H1 (cell line): ENCODE measurements at regions of chr14 and their contacts with region 1.

Region 1: GRCh38 chr14:75577729-75578101 is 705 bp upstream of the FLVCR2 start:
- DNase-seq: peak; percentile 79 to 85
- H3K4me3 ChIP-seq: peak overlapping the region; percentile 46 to 83 (median 72)
- H3K27ac ChIP-seq: no peak overlapping the region
- H3K4me1 ChIP-seq: peaks cover 0 to 13% (median 4%) of the 10 kb centered on the region in 4 experiments; a peak in 4 of 7 replicates
- H3K27me3 ChIP-seq: peaks cover 0 to 8% (median 5%) of the 10 kb centered on the region in 4 experiments; a peak in 6 of 7 replicates
- CTCF ChIP-seq: peak; percentile 75 to 91 (median 90)
- EP300 ChIP-seq: no peak
- POLR2A ChIP-seq: no peak
- RAD21 ChIP-seq: peak; percentile 88 to 92

Region 2: DNA sequence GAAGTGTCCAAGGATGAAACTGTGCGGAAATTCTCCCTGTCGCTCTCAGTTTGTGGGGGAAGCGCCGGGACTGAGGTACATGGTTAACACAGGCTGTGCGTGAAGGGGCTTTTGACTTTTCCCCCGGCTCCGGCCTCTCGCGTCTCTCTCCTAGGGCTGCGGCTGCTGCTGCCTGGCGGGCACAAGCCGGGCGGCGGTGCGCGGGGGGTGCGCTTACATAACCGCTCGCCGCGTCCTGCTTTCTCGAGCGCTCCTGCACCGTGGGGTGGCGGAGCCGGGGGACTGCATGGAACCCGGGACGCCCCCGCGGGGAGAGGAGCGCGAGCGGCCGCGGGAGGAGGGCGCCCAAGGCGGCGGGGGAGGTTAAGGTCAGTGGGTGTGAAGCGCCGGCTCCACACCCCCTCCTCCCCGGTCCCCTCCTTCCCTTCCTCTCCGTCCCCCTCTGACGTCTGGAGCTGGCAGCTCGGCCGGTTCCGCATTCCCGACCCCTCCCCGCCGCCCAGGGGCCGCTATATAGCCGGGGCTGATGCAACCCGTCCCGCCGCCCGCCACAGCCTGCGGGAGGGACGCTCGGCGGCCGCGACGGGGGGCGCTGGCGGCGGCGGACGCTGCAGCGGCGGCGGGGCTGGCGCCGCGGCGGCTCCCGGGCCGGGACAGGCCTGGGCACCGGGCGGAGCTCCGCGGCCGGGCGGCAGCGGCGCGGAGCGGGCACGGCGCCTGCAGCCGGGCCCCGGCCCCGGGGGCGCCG is 150.1 kb before region 1 on chr14 and contains the start of gene JDP2:
- CTCF ChIA-PET with region 1: no interaction called
- POLR2A ChIA-PET with region 1: no interaction called
- DNase-seq: peak in 1 of 2 experiments; percentile 79
- H3K4me3 ChIP-seq: peak within 1 kb of the TSS; percentile 59 to 77 (median 70)
- H3K27ac ChIP-seq: no peak within 1 kb of the TSS
- H3K4me1 ChIP-seq: peaks cover 8 to 17% (median 15%) of the 10 kb centered on the region in 4 experiments
- H3K27me3 ChIP-seq: peaks cover 0 to 13% (median 13%) of the 10 kb centered on the region in 4 experiments; a peak in 5 of 7 replicates
- CTCF ChIP-seq: no peak
- EP300 ChIP-seq: no peak
- POLR2A ChIP-seq: no peak; a peak in 1 of 3 replicates
- RAD21 ChIP-seq: no peak
- total RNA-seq, gene JDP2: 23.6 and 27.2 TPM in 2 replicates

Region 3: DNA sequence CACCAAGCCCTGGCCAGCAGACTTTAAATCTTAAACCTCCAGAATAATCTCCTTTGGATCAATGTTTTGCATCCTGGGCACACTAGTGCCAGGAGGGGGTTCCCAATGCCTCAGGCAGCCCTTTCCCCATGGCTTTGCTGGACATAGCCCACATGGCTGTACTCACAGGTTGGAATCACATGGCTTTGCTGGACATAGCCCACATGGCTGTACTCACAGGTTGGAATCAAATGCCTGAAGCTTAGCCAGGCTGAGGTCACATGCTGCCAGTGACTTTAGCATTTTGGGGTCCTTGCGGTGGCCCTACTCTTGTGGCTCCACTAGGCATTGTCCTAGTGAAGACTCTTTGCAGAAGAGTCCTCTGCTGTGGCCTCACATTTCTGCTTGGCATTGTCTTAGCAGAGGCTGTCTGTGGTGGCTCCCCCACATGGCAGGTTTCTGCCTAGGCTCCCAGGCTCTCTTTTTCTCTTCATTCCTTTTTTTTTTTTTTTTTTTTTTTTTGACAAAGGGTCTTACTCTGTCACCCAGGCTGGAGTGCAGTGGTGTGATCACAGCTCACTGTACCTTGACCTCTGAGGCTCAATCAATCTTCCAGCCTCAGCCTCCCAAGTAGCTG is 13.7 kb after region 1 on chr14:
- CTCF ChIA-PET with region 1: interaction called, 11 read pairs
- POLR2A ChIA-PET with region 1: interaction called, 4 read pairs
- DNase-seq: no peak
- H3K4me3 ChIP-seq: no peak overlapping the region
- H3K27ac ChIP-seq: no peak overlapping the region
- H3K4me1 ChIP-seq: no peaks in the 10 kb centered on the region
- H3K27me3 ChIP-seq: no peaks in the 10 kb centered on the region
- CTCF ChIP-seq: peak; percentile 16 to 41 (median 36); a peak in 2 of 4 replicates
- EP300 ChIP-seq: no peak
- POLR2A ChIP-seq: no peak
- RAD21 ChIP-seq: peak in 1 of 2 experiments; percentile 18; a peak in 1 of 4 replicates

Region 4: DNA sequence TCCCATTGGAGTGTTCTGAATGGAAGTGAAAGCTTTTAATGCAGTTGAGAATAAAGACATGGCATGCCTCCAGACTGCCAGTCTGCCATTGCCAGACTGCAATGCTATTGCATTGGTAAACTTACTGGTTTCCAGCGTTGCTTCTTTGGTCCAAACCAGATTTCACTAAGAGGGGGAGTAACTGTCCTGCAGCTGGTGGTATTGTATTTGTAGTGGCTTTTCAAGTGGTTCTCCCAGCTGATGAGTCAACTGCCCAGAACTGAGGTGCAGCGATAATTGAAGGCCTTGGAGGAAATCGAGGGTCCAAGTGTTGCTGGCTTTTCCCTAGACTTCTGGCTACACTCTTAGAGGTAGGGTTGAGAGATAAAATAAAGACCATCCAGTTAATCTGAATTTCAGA is 51.1 kb after region 1 on chr14:
- CTCF ChIA-PET with region 1: interaction called, 22 read pairs
- POLR2A ChIA-PET with region 1: interaction called, 4 read pairs
- DNase-seq: no peak
- H3K4me3 ChIP-seq: no peak overlapping the region
- H3K27ac ChIP-seq: no peak overlapping the region
- H3K4me1 ChIP-seq: peaks cover 9 to 31% (median 23%) of the 10 kb centered on the region in 4 experiments
- H3K27me3 ChIP-seq: no peaks in the 10 kb centered on the region
- CTCF ChIP-seq: no peak
- EP300 ChIP-seq: no peak
- POLR2A ChIP-seq: no peak
- RAD21 ChIP-seq: no peak

Region 5: GRCh38 chr14:75647650-75648049 is 69.9 kb after region 1 on chr14:
- CTCF ChIA-PET with region 1: interaction called, 348 read pairs
- POLR2A ChIA-PET with region 1: interaction called, 19 read pairs
- DNase-seq: no peak
- H3K4me3 ChIP-seq: no peak overlapping the region
- H3K27ac ChIP-seq: no peak overlapping the region
- H3K4me1 ChIP-seq: no peaks in the 10 kb centered on the region
- H3K27me3 ChIP-seq: no peaks in the 10 kb centered on the region
- CTCF ChIP-seq: no peak
- EP300 ChIP-seq: no peak
- POLR2A ChIP-seq: no peak
- RAD21 ChIP-seq: no peak

Region 6: GRCh38 chr14:75689012-75689411 is 111.3 kb after region 1 on chr14:
- CTCF ChIA-PET with region 1: interaction called, 12 read pairs
- POLR2A ChIA-PET with region 1: no interaction called
- DNase-seq: no peak
- H3K4me3 ChIP-seq: no peak overlapping the region
- H3K27ac ChIP-seq: no peak overlapping the region
- H3K4me1 ChIP-seq: no peaks in the 10 kb centered on the region
- H3K27me3 ChIP-seq: no peaks in the 10 kb centered on the region
- CTCF ChIP-seq: no peak
- EP300 ChIP-seq: no peak
- POLR2A ChIP-seq: no peak
- RAD21 ChIP-seq: no peak